Right lobe of liver (tissue), 6 donors: ENCODE measurements at regions of chr11 and their contacts with region 1.

Region 1: DNA sequence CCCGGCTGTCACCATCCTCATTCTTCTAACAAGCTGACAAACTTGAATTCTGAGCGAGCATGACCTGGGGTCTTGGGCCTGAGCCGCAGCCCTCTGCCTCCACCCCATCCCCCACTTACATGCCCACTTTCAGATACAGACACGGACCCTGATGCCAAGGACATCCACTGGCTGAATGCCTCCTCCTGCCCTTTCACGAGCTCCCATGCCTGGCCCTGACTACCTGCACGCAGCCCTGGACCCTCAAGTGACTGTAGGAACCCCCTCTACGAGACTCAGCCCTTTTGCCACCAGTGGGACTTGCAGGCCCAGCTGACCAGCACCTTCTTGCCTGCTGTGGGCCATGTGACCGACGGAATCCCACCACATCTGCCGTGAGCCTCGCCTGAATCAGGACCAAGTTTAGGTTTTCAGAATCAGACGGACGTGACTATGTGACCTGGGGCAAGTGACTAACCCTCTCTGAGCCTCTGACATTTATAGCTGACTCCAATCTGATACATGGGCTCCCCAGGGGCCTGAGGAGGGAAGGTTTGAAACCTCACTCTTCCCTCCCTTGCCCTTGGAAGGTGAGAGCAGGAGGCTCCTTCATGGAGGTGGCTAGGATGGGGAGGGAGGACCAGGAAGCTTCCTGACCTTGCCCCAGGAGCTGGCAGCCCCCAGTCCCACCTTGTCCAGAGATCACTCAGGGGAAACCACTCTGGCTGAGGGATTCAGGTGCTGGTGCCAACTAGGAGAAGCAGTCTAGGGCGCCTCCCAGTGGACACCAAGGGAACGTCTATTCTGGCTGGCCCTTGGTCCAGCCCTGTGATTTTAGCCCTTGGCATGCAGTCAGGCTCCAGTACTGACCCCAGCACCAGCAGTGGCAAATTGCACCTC is 46.9 kb upstream of the SYT7 start:
- DNase-seq: peak; percentile 68 to 70 (median 68)
- ATAC-seq: peak; percentile 84 to 97 (median 91)
- H3K4me3 ChIP-seq: no peak overlapping the region
- H3K27ac ChIP-seq: no peak overlapping the region
- H3K4me1 ChIP-seq: no peaks in the 10 kb centered on the region
- H3K27me3 ChIP-seq: no peaks in the 10 kb centered on the region
- CTCF ChIP-seq: peak; percentile 59 to 80 (median 71)
- POLR2A ChIP-seq: no peak

Region 2: DNA sequence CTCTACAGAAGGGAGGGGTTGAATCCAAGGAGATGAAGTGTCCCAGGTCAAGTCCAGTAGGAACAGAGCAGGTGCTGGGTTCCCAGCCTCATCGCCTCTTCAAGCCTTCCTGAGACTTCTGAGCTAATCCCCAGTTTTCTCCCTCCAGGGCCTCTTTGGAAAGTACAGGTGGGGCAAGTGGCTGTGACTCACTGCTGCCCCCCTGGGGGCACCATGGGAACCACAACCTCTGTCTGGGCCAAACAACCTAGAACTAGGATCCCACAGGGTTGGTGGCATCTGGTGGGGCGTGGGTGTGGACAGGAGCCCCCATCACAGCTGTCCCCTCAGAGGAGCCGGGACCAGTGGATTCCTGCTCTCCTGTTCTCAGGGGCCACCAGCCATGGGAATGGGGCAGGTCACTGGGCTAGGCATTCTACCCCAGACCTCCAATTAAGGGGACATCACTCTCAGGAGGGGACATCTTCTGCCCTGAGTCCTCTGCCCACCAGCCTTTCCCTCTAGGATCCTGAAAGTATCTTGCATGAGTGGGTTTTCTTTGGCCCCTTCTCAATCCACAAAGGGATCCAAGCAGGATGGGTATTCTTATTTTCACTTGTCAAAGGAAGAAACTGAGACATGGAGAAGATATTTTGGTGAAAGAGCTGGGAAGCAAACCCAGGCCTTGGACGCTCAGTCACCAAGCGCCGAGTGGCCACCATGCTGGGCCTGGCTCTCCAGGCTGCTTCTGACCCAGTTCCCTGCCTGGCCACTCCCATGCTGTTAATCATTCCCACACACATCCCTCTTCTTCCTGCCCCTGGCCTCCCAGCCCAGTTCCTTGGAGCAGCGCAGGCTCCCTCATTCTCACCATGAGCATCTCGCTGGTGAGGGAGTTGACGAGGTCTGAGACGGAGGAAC is 95.4 kb before region 1 on chr11:
- intact Hi-C with region 1: loop called in 1 of 2 experiments (anchors 10 kb)
- DNase-seq: peak in 2 of 3 donors; percentile 35 to 68
- ATAC-seq: peak; percentile 9 to 40 (median 22)
- H3K4me3 ChIP-seq: no peak overlapping the region
- H3K27ac ChIP-seq: no peak overlapping the region
- H3K4me1 ChIP-seq: peaks cover 0 to 43% (median 16%) of the 10 kb centered on the region in 4 donors
- H3K27me3 ChIP-seq: no peaks in the 10 kb centered on the region
- CTCF ChIP-seq: peak; percentile 63 to 86 (median 76)
- POLR2A ChIP-seq: peak; percentile 45